MCF 10A (cell line): ENCODE measurements at regions of chr3 and their contacts with region 1.

Region 1: GRCh38 chr3:5187156-5187919 is at the start of gene EDEM1:
- DNase-seq: peak; percentile 95
- H3K4me3 Mint-ChIP-seq: peak within 1 kb of the TSS; percentile 70
- H3K27ac Mint-ChIP-seq: peak within 1 kb of the TSS; percentile 95
- H3K4me1 Mint-ChIP-seq: peaks cover 24% of the 10 kb centered on the region
- H3K27me3 Mint-ChIP-seq: no peaks in the 10 kb centered on the region
- CTCF ChIP-seq: no peak
- total RNA-seq, gene EDEM1: 114 and 157 TPM in 2 replicates

Region 2: DNA sequence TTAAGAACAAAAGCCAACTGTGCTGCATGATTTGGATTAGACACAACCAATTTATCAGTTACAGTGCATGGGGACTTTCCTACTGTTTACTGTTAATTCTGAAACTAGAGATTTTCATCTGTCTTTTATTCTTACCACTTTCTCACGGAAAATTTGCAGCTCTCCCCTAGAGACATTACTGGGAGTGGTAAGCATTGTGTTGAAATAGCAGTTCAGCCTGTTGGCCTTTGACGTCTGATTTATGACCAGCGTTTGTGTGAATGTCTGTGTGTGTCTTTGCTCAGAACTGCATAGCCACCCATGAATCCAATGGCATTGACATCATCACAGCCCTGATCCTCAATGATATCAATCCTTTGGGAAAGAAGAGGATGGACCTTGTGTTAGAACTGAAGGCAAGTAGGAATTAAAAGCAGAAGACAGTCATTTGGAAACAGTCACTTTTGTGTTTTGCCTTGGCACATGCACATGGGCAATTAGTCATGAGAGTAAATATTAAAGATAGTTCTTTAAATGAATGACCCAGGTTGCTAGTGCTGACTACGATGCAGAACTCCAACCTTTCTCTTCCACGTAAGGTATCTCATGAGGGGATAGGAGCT is 410.3 kb before region 1 on chr3:
- CTCF ChIA-PET with region 1: no interaction called
- POLR2A ChIA-PET with region 1: no interaction called
- intact Hi-C with region 1: no loop called
- DNase-seq: peak; percentile 79
- H3K4me3 Mint-ChIP-seq: no peak overlapping the region
- H3K27ac Mint-ChIP-seq: peak overlapping the region; percentile 80
- H3K4me1 Mint-ChIP-seq: peaks cover 11% of the 10 kb centered on the region
- H3K27me3 Mint-ChIP-seq: no peaks in the 10 kb centered on the region
- CTCF ChIP-seq: no peak

Region 3: GRCh38 chr3:4986782-4987537 is 200.4 kb before region 1 on chr3:
- CTCF ChIA-PET with region 1: no interaction called
- POLR2A ChIA-PET with region 1: interaction called, 3 read pairs
- intact Hi-C with region 1: loop called (anchors 10 kb)
- DNase-seq: peak; percentile 98
- H3K4me3 Mint-ChIP-seq: peak overlapping the region; percentile 52
- H3K27ac Mint-ChIP-seq: no peak overlapping the region
- H3K4me1 Mint-ChIP-seq: peaks cover 35% of the 10 kb centered on the region
- H3K27me3 Mint-ChIP-seq: no peaks in the 10 kb centered on the region
- CTCF ChIP-seq: no peak

Region 4: DNA sequence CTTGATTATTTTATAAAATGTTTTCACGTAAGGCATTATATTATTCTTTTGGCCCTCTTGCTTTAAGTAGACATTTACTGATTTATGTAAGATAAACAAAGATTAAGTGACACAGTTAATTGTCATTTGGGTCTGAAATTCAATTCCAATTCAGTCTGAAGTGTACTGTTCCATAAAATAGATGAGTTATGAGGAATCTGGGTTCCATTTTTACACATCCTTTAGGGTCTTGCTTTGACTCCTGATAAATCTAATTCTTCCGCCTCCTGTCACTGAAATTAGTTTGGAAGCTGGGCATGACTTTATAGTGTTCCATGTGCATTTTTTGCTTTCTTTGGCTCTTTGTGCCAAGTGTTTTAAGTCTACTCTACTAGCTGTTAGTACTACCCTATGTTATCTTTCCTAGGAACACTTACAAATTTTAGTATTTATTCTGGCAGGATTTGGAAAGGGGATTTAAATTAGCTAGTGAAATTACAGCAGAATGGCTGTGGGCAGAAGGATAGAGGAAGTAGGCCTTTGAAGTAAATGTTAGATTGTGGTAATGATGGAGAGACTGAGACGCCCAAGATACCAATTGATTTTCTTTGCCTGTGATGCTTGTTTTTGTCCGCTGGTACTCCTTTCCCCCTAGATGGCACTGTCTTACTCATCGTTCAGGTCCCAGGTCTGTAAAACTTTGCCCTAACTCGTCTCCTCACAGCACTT is 51.0 kb before region 1 on chr3:
- CTCF ChIA-PET with region 1: interaction called, 14 read pairs
- POLR2A ChIA-PET with region 1: interaction called, 33 read pairs
- intact Hi-C with region 1: loop called (anchors 2 kb)
- DNase-seq: peak; percentile 66
- H3K4me3 Mint-ChIP-seq: peak overlapping the region; percentile 11
- H3K27ac Mint-ChIP-seq: peak overlapping the region; percentile 86
- H3K4me1 Mint-ChIP-seq: peaks cover 63% of the 10 kb centered on the region
- H3K27me3 Mint-ChIP-seq: no peaks in the 10 kb centered on the region
- CTCF ChIP-seq: peak; percentile 31

Region 5: GRCh38 chr3:5168110-5168509 is 19.2 kb before region 1 on chr3:
- CTCF ChIA-PET with region 1: interaction called, 3 read pairs
- POLR2A ChIA-PET with region 1: interaction called, 21 read pairs
- intact Hi-C with region 1: no loop called
- DNase-seq: no peak
- H3K4me3 Mint-ChIP-seq: no peak overlapping the region
- H3K27ac Mint-ChIP-seq: no peak overlapping the region
- H3K4me1 Mint-ChIP-seq: no peaks in the 10 kb centered on the region
- H3K27me3 Mint-ChIP-seq: no peaks in the 10 kb centered on the region
- CTCF ChIP-seq: no peak

Region 6: GRCh38 chr3:5275529-5275928 is 88.2 kb after region 1 on chr3:
- CTCF ChIA-PET with region 1: no interaction called
- POLR2A ChIA-PET with region 1: no interaction called
- intact Hi-C with region 1: no loop called
- DNase-seq: no peak
- H3K4me3 Mint-ChIP-seq: no peak overlapping the region
- H3K27ac Mint-ChIP-seq: no peak overlapping the region
- H3K4me1 Mint-ChIP-seq: no peaks in the 10 kb centered on the region
- H3K27me3 Mint-ChIP-seq: no peaks in the 10 kb centered on the region
- CTCF ChIP-seq: no peak

Region 7: GRCh38 chr3:5317557-5317956 is 130.2 kb after region 1 on chr3:
- CTCF ChIA-PET with region 1: no interaction called
- POLR2A ChIA-PET with region 1: no interaction called
- intact Hi-C with region 1: no loop called
- DNase-seq: no peak
- H3K4me3 Mint-ChIP-seq: no peak overlapping the region
- H3K27ac Mint-ChIP-seq: no peak overlapping the region
- H3K4me1 Mint-ChIP-seq: no peaks in the 10 kb centered on the region
- H3K27me3 Mint-ChIP-seq: no peaks in the 10 kb centered on the region
- CTCF ChIP-seq: no peak